ENCODE measurements at regions of chr3 and their contacts with region 1.

Region 1: GRCh38 chr3:23888617-23889228 is 28.1 kb downstream of the NKIRAS1 start:
- DNase-seq: no peak
- ATAC-seq: peak; percentile 42
- H3K4me3 Mint-ChIP-seq: no peak overlapping the region
- H3K27ac Mint-ChIP-seq: no peak overlapping the region
- H3K4me1 Mint-ChIP-seq: peaks cover 8% of the 10 kb centered on the region
- H3K27me3 Mint-ChIP-seq: no peaks in the 10 kb centered on the region
- CTCF ChIP-seq: peak; percentile 78

Region 2: DNA sequence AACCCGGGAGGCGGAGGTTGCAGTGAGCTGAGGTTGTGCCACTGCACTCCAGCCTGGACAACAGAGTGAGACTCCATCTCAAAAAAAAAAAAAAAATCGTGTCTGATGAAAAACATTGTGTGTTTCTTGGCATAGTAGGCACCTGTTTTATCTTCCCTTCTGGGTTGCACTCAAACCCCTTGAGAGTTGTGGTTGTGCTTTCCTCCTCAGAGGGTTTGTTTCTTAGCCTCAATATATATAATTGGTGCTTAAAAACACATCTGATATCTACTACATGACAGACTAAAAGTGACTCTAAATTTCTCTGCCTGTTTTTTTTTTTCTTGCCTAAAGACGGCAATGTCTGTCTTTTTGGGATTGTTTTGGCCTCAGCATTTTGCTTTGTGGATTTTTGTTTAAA is 63.9 kb after region 1 on chr3:
- CTCF ChIA-PET with region 1: no interaction called
- POLR2A ChIA-PET with region 1: interaction called, 5 read pairs
- intact Hi-C with region 1: loop called (anchors 2 kb)
- DNase-seq: no peak
- ATAC-seq: peak; percentile 93
- H3K4me3 Mint-ChIP-seq: peak overlapping the region; percentile 69
- H3K27ac Mint-ChIP-seq: peak overlapping the region; percentile 78
- H3K4me1 Mint-ChIP-seq: peaks cover 68% of the 10 kb centered on the region
- H3K27me3 Mint-ChIP-seq: no peaks in the 10 kb centered on the region
- CTCF ChIP-seq: no peak

Region 3: GRCh38 chr3:24229468-24230221 is 340.9 kb after region 1 on chr3:
- CTCF ChIA-PET with region 1: interaction called, 11 read pairs
- POLR2A ChIA-PET with region 1: no interaction called
- intact Hi-C with region 1: no loop called
- DNase-seq: no peak
- ATAC-seq: no peak
- H3K4me3 Mint-ChIP-seq: no peak overlapping the region
- H3K27ac Mint-ChIP-seq: no peak overlapping the region
- H3K4me1 Mint-ChIP-seq: peaks cover 6% of the 10 kb centered on the region
- H3K27me3 Mint-ChIP-seq: no peaks in the 10 kb centered on the region
- CTCF ChIP-seq: no peak

Region 4: DNA sequence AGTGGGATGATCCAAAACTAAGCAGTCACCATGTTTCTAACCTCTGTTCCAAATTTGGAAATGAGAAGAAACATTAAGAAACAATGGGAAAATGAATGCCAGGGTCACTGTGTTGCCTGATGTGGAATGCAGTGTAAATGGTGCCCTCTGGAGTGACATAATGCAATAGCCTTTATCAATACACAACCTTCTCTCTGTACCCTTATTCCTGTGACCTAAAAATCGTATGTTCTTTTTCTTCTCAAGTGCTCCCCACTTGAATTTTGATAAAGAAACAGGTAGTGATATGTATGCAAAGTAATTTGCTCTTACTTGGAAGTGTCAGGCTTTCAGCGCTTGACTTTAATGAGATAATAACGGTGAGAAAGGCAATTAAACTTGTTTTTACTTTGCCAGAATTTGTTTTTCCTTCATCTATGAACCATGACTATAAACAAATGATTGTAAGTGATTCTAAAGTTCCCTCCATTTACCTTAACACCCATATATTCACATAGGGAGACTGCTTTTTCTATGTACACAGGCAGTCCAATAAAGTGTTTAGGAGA is 751.7 kb after region 1 on chr3:
- CTCF ChIA-PET with region 1: no interaction called
- POLR2A ChIA-PET with region 1: no interaction called
- intact Hi-C with region 1: loop called (anchors 10 kb)
- DNase-seq: no peak
- ATAC-seq: no peak
- H3K4me3 Mint-ChIP-seq: no peak overlapping the region
- H3K27ac Mint-ChIP-seq: no peak overlapping the region
- H3K4me1 Mint-ChIP-seq: no peaks in the 10 kb centered on the region
- H3K27me3 Mint-ChIP-seq: peaks cover 9% of the 10 kb centered on the region
- CTCF ChIP-seq: no peak